ENCODE measurements at regions of chr2 and their contacts with region 1.

Region 1: DNA sequence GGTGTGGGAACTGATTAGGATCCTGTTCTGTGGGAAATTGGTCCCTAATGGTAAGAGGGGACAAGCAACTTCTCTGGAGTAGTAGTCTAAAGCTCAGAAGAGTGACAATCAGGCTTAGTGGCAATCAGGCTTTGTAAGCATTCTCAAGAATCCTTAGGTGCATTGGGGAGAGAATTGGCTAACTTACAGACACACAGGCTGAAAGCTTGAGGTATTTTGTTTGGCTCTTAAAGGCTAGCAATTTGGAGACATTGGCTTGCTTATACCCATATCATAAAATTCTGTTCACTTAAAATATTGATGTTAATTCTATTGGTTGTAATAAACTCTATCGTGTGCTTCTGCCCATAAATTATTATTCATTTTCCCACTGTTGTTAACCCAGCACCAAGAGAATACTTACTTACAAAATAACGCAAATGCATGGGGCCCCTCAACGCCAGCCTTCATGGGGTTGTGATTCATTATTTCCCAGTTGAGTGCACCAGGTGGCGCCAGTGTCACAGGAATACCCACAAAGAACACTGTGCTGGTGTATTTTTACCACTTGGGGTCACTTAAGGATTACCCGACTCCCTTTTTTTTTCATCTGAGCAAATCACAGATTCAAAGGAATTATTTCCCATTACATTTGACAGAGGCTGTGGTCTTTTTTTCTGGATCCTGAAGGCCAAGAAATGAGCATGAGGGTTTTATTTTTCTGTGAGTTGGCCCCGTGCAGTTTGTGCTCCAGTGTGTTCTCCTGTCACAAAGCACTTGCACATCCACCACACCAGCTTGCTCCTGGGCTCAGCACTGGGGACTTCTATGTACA is 45.5 kb downstream of the DDX1 start:
- DNase-seq: peak in 1 of 2 donors; percentile 84
- H3K4me3 ChIP-seq: no peak overlapping the region
- H3K27ac ChIP-seq: peak overlapping the region in 1 of 2 donors; percentile 7
- H3K4me1 ChIP-seq: peaks cover 0 to 32% of the 10 kb centered on the region in 2 donors
- H3K27me3 ChIP-seq: no peaks in the 10 kb centered on the region
- CTCF ChIP-seq: peak; percentile 79 to 85 (median 85)

Region 2: DNA sequence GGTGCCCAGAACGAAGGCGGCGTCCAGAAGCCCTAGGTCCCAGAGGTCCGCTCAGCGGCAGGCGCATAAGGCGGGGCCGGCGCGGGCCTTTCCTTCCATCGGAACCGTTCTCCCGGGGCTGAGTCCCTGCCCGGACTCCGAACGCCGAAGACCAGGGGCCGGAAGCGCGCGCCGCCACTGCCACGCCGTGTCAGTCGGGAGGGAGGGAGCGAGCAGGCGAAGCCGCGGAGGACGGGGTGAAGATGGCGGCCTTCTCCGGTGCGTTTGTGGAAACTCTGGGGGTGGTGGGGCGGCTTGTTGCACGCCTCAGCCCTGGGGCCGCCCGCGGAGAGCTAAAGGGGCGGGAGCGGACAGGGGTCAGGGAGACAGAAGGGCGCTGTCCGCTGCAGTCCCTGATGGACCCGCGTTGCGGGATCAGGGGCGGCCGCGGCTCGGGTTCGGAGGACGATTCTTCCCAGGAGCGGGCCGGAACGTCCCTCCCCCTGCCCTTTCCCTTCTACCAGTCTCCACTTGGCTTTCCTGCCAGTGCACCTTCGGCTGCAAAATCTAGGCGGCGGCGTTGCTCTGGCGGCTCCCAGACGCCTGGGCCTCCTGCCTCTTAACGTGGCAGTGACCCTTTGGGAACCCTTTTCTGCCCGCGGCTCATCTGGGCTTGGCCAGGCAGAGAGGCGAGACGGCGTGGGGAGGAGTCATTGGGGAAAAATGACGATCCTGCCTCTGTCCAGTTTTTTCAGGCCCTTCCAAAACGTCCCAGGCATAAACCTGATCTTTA is 45.3 kb before region 1 on chr2 and contains the start of gene DDX1:
- intact Hi-C with region 1: loop called (anchors 2 kb)
- DNase-seq: peak; percentile 11 to 90
- H3K4me3 ChIP-seq: peak within 1 kb of the TSS; percentile 73 to 95
- H3K27ac ChIP-seq: peak within 1 kb of the TSS; percentile 89 to 91
- H3K4me1 ChIP-seq: peaks cover 0 to 20% of the 10 kb centered on the region in 2 donors
- H3K27me3 ChIP-seq: no peaks in the 10 kb centered on the region
- CTCF ChIP-seq: no peak
- total RNA-seq, gene DDX1: 21.5 TPM

Region 3: GRCh38 chr2:15748736-15749323 is 111.7 kb after region 1 on chr2:
- intact Hi-C with region 1: loop called (anchors 5 kb)
- DNase-seq: no peak
- H3K4me3 ChIP-seq: no peak overlapping the region
- H3K27ac ChIP-seq: peak overlapping the region in 1 of 2 donors; percentile 53
- H3K4me1 ChIP-seq: peaks cover 5 to 19% of the 10 kb centered on the region in 2 donors
- H3K27me3 ChIP-seq: no peaks in the 10 kb centered on the region
- CTCF ChIP-seq: peak in 2 of 3 experiments; percentile 8 to 14

Region 4: GRCh38 chr2:16507655-16508489 is 870.7 kb after region 1 on chr2:
- intact Hi-C with region 1: loop called (anchors 2 kb)
- DNase-seq: no peak
- H3K4me3 ChIP-seq: peak overlapping the region; percentile 51 to 54
- H3K27ac ChIP-seq: no peak overlapping the region
- H3K4me1 ChIP-seq: peaks cover 0 to 4% of the 10 kb centered on the region in 2 donors
- H3K27me3 ChIP-seq: no peaks in the 10 kb centered on the region
- CTCF ChIP-seq: peak; percentile 21 to 52 (median 25)

Region 5: DNA sequence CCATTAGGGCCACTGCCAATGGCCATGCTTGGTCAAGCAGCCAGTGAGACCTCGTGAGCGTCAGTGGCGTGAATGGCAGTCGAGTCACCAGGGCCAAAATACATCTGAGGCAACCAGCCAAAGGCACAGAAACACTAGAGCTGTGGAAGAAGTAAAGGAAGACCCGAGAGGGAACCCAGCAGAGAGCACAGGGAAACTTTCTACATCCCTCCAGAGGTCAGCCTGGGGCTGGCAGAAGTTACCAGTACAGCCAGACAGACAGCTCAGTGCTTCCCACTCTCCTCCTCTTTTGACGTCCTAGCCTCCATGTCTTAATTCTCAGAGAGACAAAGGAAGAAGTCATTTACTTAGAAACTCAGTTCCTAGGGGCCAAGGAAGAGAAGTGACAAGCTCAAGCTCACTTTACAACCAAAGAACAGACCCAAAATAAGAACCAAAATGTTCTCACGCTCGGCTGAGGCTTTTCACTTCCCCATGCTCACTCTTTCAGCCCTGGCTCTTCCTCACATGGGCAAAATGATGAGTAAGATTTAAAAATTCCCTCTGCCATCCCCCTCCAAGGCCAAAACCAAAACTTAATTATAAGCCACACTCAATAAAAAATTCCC is 1019.7 kb after region 1 on chr2:
- intact Hi-C with region 1: loop called (anchors 5 kb)
- DNase-seq: peak; percentile 47 to 80
- H3K4me3 ChIP-seq: peak overlapping the region in 1 of 2 donors; percentile 19
- H3K27ac ChIP-seq: peak overlapping the region; percentile 69 to 78
- H3K4me1 ChIP-seq: peaks cover 3 to 42% of the 10 kb centered on the region in 2 donors
- H3K27me3 ChIP-seq: no peaks in the 10 kb centered on the region
- CTCF ChIP-seq: no peak

Measured in ascending aorta (tissue), 2 donors.